PC-3 (cell line): ENCODE measurements at regions of chr7 and their contacts with region 1.

Region 1: DNA sequence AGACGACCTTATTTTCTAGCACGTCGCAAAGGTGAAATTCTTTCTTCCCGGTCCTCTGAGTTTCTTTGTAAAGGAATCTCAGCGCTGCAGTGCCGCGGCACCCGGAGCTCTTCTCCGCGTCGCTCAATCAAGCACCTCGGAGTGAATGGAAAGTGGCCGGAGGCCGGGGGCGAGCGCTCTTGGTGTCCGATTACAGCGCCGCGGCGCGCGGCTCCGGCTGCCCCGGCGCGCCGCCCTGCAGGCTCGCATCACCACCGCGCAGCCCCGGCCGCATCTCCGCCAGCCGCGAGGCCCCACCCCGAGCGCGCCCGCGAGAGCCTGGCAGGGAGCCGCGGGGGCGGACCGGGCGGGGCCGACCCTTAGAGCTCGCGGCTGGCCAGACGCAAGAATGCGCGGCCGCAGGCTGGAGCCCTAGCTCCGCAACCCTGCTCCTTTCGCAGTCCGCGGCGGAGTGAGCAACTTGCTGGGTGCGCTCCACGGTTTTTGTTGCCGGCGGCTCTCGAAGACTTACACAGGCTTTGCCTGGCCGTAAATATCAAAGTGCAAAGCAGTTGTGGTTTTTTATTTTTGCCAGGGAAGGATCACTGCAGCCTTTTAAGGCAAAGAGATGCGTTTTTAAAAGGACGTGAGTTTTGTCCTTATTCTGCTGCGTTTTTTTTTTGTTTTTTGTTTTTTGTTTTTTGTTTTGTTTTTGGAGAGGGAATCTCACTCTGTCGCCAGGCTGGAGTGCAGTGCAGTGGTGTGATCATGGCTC is at the start of gene SEMA3C:
- DNase-seq: peak; percentile 95
- ATAC-seq: peak; percentile 73
- H3K4me3 ChIP-seq: peak within 1 kb of the TSS; percentile 96
- H3K27ac ChIP-seq: peak within 1 kb of the TSS; percentile 98
- H3K4me1 ChIP-seq: peaks cover 71% of the 10 kb centered on the region
- H3K27me3 ChIP-seq: no peaks in the 10 kb centered on the region
- CTCF ChIP-seq: no peak
- total RNA-seq, gene SEMA3C: 27.4 and 28.0 TPM in 2 replicates

Region 2: DNA sequence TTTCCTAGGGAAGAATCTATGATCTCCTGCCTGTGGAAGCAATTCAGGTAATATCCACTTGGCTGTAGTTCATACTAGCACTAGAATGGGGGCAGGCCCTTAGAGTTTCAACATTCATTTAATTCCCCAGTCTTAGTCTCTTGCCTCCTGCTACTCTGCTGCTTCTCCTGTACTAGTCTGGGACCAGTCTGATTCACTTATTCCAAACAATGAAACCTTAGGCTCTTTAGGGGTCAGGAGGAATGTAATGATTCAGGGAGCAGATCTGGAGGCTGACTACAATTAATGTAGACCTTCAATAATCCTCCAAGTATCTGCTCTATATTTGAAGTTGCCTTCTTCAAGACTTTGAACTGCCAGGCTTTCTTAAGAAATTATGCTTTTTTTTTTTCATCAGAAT is 509.0 kb before region 1 on chr7:
- CTCF ChIA-PET with region 1: no interaction called
- POLR2A ChIA-PET with region 1: no interaction called
- intact Hi-C with region 1: no loop called
- DNase-seq: no peak
- ATAC-seq: no peak
- H3K4me3 ChIP-seq: no peak overlapping the region
- H3K27ac ChIP-seq: no peak overlapping the region
- H3K4me1 ChIP-seq: peaks cover 6% of the 10 kb centered on the region; the same call in 1 of the 2 replicates
- H3K27me3 ChIP-seq: no peaks in the 10 kb centered on the region
- CTCF ChIP-seq: no peak

Region 3: DNA sequence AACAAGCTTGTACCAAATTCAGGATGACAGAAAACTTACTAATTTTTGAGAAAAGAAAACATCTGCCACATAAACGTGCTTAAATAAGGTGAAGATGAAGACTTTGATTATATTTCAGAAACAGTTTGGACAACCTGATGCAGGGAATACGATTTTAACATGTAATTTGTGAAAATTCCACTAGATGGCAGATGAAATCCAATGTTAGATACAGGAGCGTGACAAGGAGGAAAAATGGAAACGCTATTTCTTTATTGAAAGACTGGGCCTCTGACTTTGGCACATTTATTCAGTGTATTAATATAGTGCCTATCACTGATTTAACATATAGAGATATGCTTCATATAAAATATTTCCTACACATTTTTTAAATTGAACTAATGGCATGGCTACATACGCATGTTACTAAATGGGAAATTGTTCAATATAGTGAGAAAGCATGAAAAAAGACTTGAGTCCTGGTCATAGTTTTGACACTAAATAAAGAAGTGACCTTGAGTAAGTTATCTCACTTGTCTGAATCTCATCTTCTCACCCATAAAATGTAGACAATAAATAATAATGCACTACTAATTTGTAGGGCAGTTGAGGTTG is 219.9 kb before region 1 on chr7:
- CTCF ChIA-PET with region 1: no interaction called
- POLR2A ChIA-PET with region 1: no interaction called
- intact Hi-C with region 1: loop called (anchors 1 kb)
- DNase-seq: peak; percentile 85
- ATAC-seq: peak; percentile 70
- H3K4me3 ChIP-seq: no peak overlapping the region
- H3K27ac ChIP-seq: no peak overlapping the region
- H3K4me1 ChIP-seq: peaks cover 10% of the 10 kb centered on the region; the same call in 1 of the 2 replicates
- H3K27me3 ChIP-seq: no peaks in the 10 kb centered on the region
- CTCF ChIP-seq: peak; percentile 81

Region 4: DNA sequence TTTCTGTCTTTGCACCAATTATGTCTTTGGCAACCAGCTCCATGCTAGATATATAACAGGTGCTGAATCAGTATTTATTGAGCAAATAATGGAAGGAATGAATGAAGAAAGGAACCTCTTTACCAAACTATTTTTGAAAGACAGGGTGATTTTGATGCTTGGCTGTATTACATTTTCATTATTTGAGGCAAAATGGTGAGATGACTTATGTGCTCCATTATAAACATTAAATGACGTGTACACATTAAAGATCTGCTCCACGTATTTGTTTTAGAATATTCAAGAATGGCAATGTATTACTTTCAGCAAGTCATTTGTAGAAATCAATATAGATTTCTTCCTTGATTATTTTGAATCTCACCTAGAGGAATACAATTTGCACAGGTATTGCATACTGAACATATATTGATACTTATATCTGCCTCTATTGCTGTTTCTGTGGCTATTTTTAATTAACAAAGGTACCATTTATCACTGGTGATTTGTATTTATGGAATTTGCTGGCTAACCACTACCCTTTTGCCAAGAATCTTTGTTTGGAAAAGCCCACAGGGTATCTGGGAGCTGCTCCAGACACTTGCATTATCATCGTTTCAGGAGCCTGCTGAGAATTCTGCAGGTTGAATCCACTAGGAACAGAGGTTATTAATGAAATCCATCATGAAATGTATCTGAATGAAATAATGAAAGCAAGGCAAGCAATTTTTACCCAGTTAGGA is 92.4 kb before region 1 on chr7:
- CTCF ChIA-PET with region 1: no interaction called
- POLR2A ChIA-PET with region 1: no interaction called
- intact Hi-C with region 1: loop called (anchors 2 kb)
- DNase-seq: peak; percentile 87
- ATAC-seq: peak; percentile 82
- H3K4me3 ChIP-seq: 0 out of 2 replicates have a peak overlapping the region, but pooled peaks have one; percentile 14
- H3K27ac ChIP-seq: peak overlapping the region; percentile 80
- H3K4me1 ChIP-seq: peaks cover 51% of the 10 kb centered on the region
- H3K27me3 ChIP-seq: no peaks in the 10 kb centered on the region
- CTCF ChIP-seq: no peak

Region 5: GRCh38 chr7:81029511-81029910 is 110.4 kb after region 1 on chr7:
- CTCF ChIA-PET with region 1: no interaction called
- POLR2A ChIA-PET with region 1: interaction called, 3 read pairs
- intact Hi-C with region 1: loop called (anchors 5 kb)
- DNase-seq: no peak
- ATAC-seq: no peak
- H3K4me3 ChIP-seq: no peak overlapping the region
- H3K27ac ChIP-seq: no peak overlapping the region
- H3K4me1 ChIP-seq: peaks cover 16% of the 10 kb centered on the region
- H3K27me3 ChIP-seq: no peaks in the 10 kb centered on the region
- CTCF ChIP-seq: no peak

Region 6: GRCh38 chr7:81165070-81165469 is 246.0 kb after region 1 on chr7:
- CTCF ChIA-PET with region 1: no interaction called
- POLR2A ChIA-PET with region 1: interaction called, 15 read pairs
- intact Hi-C with region 1: loop called (anchors 5 kb)
- DNase-seq: no peak
- ATAC-seq: no peak
- H3K4me3 ChIP-seq: no peak overlapping the region
- H3K27ac ChIP-seq: no peak overlapping the region
- H3K4me1 ChIP-seq: peaks cover 11% of the 10 kb centered on the region
- H3K27me3 ChIP-seq: no peaks in the 10 kb centered on the region
- CTCF ChIP-seq: no peak

Region 7: GRCh38 chr7:81298951-81299669 is 380.0 kb after region 1 on chr7:
- CTCF ChIA-PET with region 1: interaction called, 3 read pairs
- POLR2A ChIA-PET with region 1: no interaction called
- intact Hi-C with region 1: loop called (anchors 2 kb)
- DNase-seq: peak; percentile 89
- ATAC-seq: peak; percentile 99
- H3K4me3 ChIP-seq: peak overlapping the region; percentile 8; the same call in 1 of the 2 replicates
- H3K27ac ChIP-seq: peak overlapping the region; percentile 57
- H3K4me1 ChIP-seq: peaks cover 29% of the 10 kb centered on the region
- H3K27me3 ChIP-seq: no peaks in the 10 kb centered on the region
- CTCF ChIP-seq: no peak